CD8-positive, alpha-beta memory T cell (primary cell): ENCODE measurements at regions of chr3 and their contacts with region 1.

Region 1: GRCh38 chr3:152268555-152269425 is at the start of gene MBNL1:
- DNase-seq: peak; percentile 75 to 94 (median 83)
- H3K4me3 ChIP-seq: peak within 1 kb of the TSS; percentile 97
- H3K4me3 Mint-ChIP-seq: peak within 1 kb of the TSS; percentile 89 to 100 (median 99)
- H3K27ac ChIP-seq: peak within 1 kb of the TSS; percentile 96
- H3K27ac Mint-ChIP-seq: peak within 1 kb of the TSS; percentile 94 to 100 (median 98)
- H3K4me1 ChIP-seq: peaks cover 55% of the 10 kb centered on the region
- H3K4me1 Mint-ChIP-seq: peaks cover 63 to 76% (median 67%) of the 10 kb centered on the region in 3 donors
- H3K27me3 ChIP-seq: no peaks in the 10 kb centered on the region
- H3K27me3 Mint-ChIP-seq: peaks cover 0 to 3% of the 10 kb centered on the region in 2 donors
- total RNA-seq, gene MBNL1: 386 to 391 TPM

Region 2: DNA sequence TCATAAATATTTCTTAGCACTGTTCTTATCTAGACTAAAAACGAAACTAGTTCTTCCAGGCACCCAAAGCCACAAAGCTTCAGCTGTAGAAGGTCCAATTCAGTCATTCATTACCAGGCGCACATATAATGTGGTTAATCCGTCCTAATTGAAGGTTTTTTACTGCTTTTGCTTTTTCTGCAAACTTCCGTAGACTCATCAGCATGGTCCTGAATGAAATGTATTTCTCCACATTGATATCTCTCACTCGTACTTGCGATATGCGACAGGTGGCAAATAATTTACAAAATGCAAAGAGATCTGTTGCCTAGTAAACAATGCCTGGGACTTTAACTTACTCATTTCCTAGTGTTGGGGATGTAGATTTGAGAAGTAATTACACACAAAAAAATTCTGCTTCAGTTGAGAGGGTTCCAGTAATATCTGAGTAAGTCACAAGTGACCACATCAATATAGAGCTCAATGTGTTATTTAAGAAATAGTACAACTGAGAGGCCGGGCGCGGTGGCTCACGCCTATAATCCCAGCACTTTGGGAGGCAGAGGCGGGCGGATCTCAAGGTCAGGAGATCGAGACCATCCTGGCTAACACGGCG is 75.0 kb before region 1 on chr3:
- CTCF ChIA-PET with region 1: interaction called, 25 read pairs
- POLR2A ChIA-PET with region 1: interaction called, 29 read pairs
- DNase-seq: peak in 3 of 5 donors; percentile 11 to 61 (median 48)
- H3K4me3 ChIP-seq: peak overlapping the region; percentile 81
- H3K4me3 Mint-ChIP-seq: peak overlapping the region; percentile 87 to 95 (median 89)
- H3K27ac ChIP-seq: peak overlapping the region; percentile 83
- H3K27ac Mint-ChIP-seq: peak overlapping the region; percentile 87 to 99 (median 94)
- H3K4me1 ChIP-seq: peaks cover 66% of the 10 kb centered on the region
- H3K4me1 Mint-ChIP-seq: peaks cover 68 to 89% (median 89%) of the 10 kb centered on the region in 3 donors
- H3K27me3 ChIP-seq: no peaks in the 10 kb centered on the region
- H3K27me3 Mint-ChIP-seq: no peaks in the 10 kb centered on the region

Region 3: GRCh38 chr3:152205097-152205593 is 63.6 kb before region 1 on chr3:
- CTCF ChIA-PET with region 1: interaction called, 25 read pairs
- POLR2A ChIA-PET with region 1: interaction called, 34 read pairs
- DNase-seq: peak in 1 of 5 donors; percentile 40
- H3K4me3 ChIP-seq: peak overlapping the region; percentile 69
- H3K4me3 Mint-ChIP-seq: peak overlapping the region; percentile 80 to 91 (median 89)
- H3K27ac ChIP-seq: peak overlapping the region; percentile 62
- H3K27ac Mint-ChIP-seq: peak overlapping the region; percentile 64 to 97 (median 96)
- H3K4me1 ChIP-seq: peaks cover 64% of the 10 kb centered on the region
- H3K4me1 Mint-ChIP-seq: peaks cover 50 to 89% (median 81%) of the 10 kb centered on the region in 3 donors
- H3K27me3 ChIP-seq: no peaks in the 10 kb centered on the region
- H3K27me3 Mint-ChIP-seq: no peaks in the 10 kb centered on the region

Region 4: DNA sequence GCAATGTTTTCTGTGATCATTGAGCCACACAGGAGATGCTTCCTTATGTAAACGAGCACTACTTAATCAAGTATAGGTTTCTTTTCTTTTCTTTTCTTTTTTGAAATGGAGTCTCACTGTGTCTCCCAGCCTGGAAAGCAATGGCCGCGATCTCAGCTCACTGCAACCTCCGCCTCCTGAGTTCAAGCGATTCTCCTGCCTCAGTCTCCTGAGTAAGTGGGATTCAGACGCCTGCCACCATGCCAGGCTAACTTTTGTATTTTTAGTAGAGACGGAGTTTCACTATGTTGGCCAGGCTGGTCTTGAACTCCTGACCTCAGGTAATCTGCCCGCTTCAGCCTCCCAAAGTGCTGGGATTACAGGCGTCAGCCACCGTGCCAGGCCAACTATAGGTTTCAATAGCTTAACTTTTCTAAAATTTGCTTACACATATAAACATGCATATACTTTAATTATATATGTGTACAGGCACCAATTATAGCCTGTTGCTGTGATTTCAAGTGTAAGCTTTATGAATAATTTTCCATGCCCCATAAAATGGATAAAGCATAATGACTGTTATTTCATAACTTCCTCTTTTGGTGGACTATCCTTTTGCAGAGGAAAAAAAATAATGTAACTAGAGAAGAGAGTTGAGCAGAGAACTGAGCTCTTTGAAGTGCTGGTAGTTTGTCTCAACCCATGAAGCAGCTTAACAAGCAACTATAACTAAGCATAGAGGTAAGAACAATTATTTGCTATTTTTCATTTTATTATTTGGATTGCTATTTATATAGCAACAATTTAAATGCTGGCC is 24.9 kb before region 1 on chr3:
- CTCF ChIA-PET with region 1: interaction called, 20 read pairs
- POLR2A ChIA-PET with region 1: interaction called, 64 read pairs
- DNase-seq: peak in 3 of 5 donors; percentile 28 to 52 (median 49)
- H3K4me3 ChIP-seq: peak overlapping the region; percentile 57
- H3K4me3 Mint-ChIP-seq: peak overlapping the region; percentile 89 to 95 (median 92)
- H3K27ac ChIP-seq: peak overlapping the region; percentile 86
- H3K27ac Mint-ChIP-seq: peak overlapping the region; percentile 68 to 97 (median 92)
- H3K4me1 ChIP-seq: peaks cover 51% of the 10 kb centered on the region
- H3K4me1 Mint-ChIP-seq: peaks cover 50 to 64% (median 61%) of the 10 kb centered on the region in 3 donors
- H3K27me3 ChIP-seq: no peaks in the 10 kb centered on the region
- H3K27me3 Mint-ChIP-seq: no peaks in the 10 kb centered on the region

Region 5: GRCh38 chr3:152258448-152259393 is 10.1 kb before region 1 on chr3:
- CTCF ChIA-PET with region 1: interaction called, 37 read pairs
- POLR2A ChIA-PET with region 1: interaction called, 53 read pairs
- DNase-seq: peak; percentile 47 to 88 (median 60)
- H3K4me3 ChIP-seq: peak overlapping the region; percentile 27
- H3K4me3 Mint-ChIP-seq: peak overlapping the region; percentile 65 to 81 (median 79)
- H3K27ac ChIP-seq: peak overlapping the region; percentile 52
- H3K27ac Mint-ChIP-seq: peak overlapping the region; percentile 93 to 98 (median 96)
- H3K4me1 ChIP-seq: peaks cover 90% of the 10 kb centered on the region
- H3K4me1 Mint-ChIP-seq: peaks cover 88 to 96% (median 93%) of the 10 kb centered on the region in 3 donors
- H3K27me3 ChIP-seq: no peaks in the 10 kb centered on the region
- H3K27me3 Mint-ChIP-seq: no peaks in the 10 kb centered on the region

Region 6: GRCh38 chr3:152281133-152281713 is 12.4 kb after region 1 on chr3:
- CTCF ChIA-PET with region 1: no interaction called
- POLR2A ChIA-PET with region 1: interaction called, 23 read pairs
- DNase-seq: no peak
- H3K4me3 ChIP-seq: peak overlapping the region; percentile 30
- H3K4me3 Mint-ChIP-seq: peak overlapping the region; percentile 28 to 77 (median 66)
- H3K27ac ChIP-seq: no peak overlapping the region
- H3K27ac Mint-ChIP-seq: peak overlapping the region; percentile 60 to 96 (median 82)
- H3K4me1 ChIP-seq: peaks cover 92% of the 10 kb centered on the region
- H3K4me1 Mint-ChIP-seq: peaks cover 76 to 97% (median 93%) of the 10 kb centered on the region in 3 donors
- H3K27me3 ChIP-seq: no peaks in the 10 kb centered on the region
- H3K27me3 Mint-ChIP-seq: no peaks in the 10 kb centered on the region